A549 (cell line): ENCODE measurements at regions of chr20 and their contacts with region 1.

Region 1: DNA sequence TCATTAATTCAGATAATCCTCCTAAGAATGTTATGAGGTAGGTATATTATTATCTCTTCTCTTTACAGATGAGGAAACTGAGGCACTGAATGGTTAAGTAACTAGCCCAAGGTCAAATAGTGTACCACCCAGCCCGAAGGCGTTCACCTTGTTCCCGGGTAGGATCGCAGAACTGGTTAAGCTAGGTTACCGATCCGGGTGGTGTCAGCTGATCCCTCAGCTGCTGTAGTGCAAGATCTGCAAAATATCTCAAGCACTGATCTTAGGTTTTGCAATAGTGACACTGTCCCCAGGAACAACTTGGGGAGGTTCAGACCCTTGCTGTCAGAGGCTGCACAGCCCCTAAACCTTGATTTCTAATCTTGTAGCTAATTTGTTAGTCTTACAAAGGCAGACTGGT is 28.2 kb downstream of the SLC52A3 start:
- DNase-seq: no peak
- ATAC-seq: no peak
- H3K4me3 ChIP-seq: no peak overlapping the region
- H3K27ac ChIP-seq: no peak overlapping the region
- H3K4me1 ChIP-seq: no peaks in the 10 kb centered on the region
- CTCF ChIP-seq: no peak
- EP300 ChIP-seq: no peak
- POLR2A ChIP-seq: no peak
- RAD21 ChIP-seq: no peak

Region 2: GRCh38 chr20:431012-431904 is 308.9 kb before region 1 on chr20:
- CTCF ChIA-PET with region 1: interaction called, 20 read pairs
- POLR2A ChIA-PET with region 1: no interaction called
- DNase-seq: peak; percentile 94 to 95
- ATAC-seq: peak; percentile 70 to 93
- H3K4me3 ChIP-seq: no peak overlapping the region
- H3K27ac ChIP-seq: peak overlapping the region; percentile 27 to 73; a peak in 5 of 6 replicates
- H3K4me1 ChIP-seq: peaks cover 16% of the 10 kb centered on the region
- CTCF ChIP-seq: peak; percentile 99
- EP300 ChIP-seq: no peak
- POLR2A ChIP-seq: no peak
- RAD21 ChIP-seq: peak; percentile 95 to 98

Region 3: DNA sequence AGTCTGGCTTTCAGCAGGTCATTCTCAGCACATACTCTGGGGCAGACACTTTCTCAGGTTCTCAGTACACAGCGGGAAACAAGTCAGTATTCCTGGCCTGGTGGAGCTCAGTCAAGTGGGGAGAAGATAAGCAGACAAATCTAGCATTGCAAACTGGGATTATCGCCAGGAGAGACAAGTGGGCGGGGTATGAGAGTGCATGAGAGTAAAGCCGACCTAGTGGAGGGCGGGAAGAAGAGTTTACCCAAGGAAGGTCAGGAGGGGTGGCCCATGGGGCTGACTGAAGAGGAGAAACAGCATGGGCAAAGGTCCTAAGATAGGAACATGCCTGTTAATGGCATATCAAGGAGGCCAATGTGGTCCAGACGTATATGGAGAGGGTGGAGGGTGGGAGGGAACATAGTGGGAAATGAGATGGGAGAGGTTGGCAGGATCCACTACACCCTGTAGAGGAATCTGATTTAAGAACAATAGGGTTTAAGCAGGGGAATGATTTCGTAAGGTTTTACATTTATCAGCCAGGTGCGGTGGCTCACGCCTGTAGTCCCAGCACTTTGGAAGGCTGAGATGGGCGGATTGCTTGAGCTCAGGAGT is 184.1 kb before region 1 on chr20:
- CTCF ChIA-PET with region 1: interaction called, 432 read pairs
- POLR2A ChIA-PET with region 1: no interaction called
- DNase-seq: no peak
- ATAC-seq: no peak; a peak in 2 of 6 replicates
- H3K4me3 ChIP-seq: no peak overlapping the region
- H3K27ac ChIP-seq: no peak overlapping the region
- H3K4me1 ChIP-seq: peaks cover 16% of the 10 kb centered on the region; the same call in 2 of the 3 replicates
- CTCF ChIP-seq: no peak
- EP300 ChIP-seq: no peak
- POLR2A ChIP-seq: no peak
- RAD21 ChIP-seq: no peak

Region 4: GRCh38 chr20:653110-653589 is 87.0 kb before region 1 on chr20 and contains the start of gene SRXN1:
- CTCF ChIA-PET with region 1: interaction called, 25 read pairs
- POLR2A ChIA-PET with region 1: no interaction called
- DNase-seq: peak; percentile 93 to 98
- ATAC-seq: peak; percentile 83 to 86
- H3K4me3 ChIP-seq: peak within 1 kb of the TSS; percentile 87
- H3K27ac ChIP-seq: peak within 1 kb of the TSS; percentile 98
- H3K4me1 ChIP-seq: peaks cover 29% of the 10 kb centered on the region
- CTCF ChIP-seq: peak; percentile 93
- EP300 ChIP-seq: peak; percentile 52 to 81; a peak in 3 of 5 replicates
- POLR2A ChIP-seq: peak; percentile 93
- RAD21 ChIP-seq: peak; percentile 58 to 80
- polyA plus RNA-seq, gene SRXN1: 262 and 302 TPM in 2 replicates

Region 5: GRCh38 chr20:714453-714852 is 25.7 kb before region 1 on chr20:
- CTCF ChIA-PET with region 1: interaction called, 10 read pairs
- POLR2A ChIA-PET with region 1: no interaction called
- DNase-seq: no peak
- ATAC-seq: no peak
- H3K4me3 ChIP-seq: no peak overlapping the region
- H3K27ac ChIP-seq: no peak overlapping the region
- H3K4me1 ChIP-seq: no peaks in the 10 kb centered on the region
- CTCF ChIP-seq: no peak
- EP300 ChIP-seq: no peak
- POLR2A ChIP-seq: no peak
- RAD21 ChIP-seq: no peak

Region 6: DNA sequence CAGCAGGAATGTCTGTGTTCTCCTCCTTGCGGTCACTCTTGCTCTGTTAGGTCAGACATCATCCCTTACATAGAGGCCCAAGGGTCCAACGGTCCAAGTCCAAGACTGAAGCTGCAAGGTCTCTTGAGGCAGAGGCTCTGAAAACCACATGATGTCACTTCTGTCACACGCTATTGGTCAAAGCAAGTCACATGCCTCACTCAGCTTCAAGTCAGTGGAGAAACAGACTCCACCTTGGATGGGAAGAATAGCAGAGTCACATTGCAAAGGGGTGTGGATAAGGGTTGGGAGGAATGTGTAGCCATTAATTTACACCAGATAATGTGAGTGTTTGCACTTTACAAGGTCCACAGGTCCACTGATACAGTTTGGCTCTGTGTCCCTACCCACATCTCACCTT is 10.7 kb after region 1 on chr20:
- CTCF ChIA-PET with region 1: interaction called, 26 read pairs
- POLR2A ChIA-PET with region 1: no interaction called
- DNase-seq: peak in 1 of 2 experiments; percentile 49
- ATAC-seq: peak; percentile 42 to 50; a peak in 4 of 6 replicates
- H3K4me3 ChIP-seq: no peak overlapping the region
- H3K27ac ChIP-seq: no peak overlapping the region
- H3K4me1 ChIP-seq: no peaks in the 10 kb centered on the region
- CTCF ChIP-seq: no peak
- EP300 ChIP-seq: no peak
- POLR2A ChIP-seq: no peak
- RAD21 ChIP-seq: no peak

Region 7: GRCh38 chr20:768426-768978 is 28.4 kb after region 1 on chr20 and contains the start of gene SLC52A3:
- CTCF ChIA-PET with region 1: interaction called, 26 read pairs
- POLR2A ChIA-PET with region 1: no interaction called
- DNase-seq: peak; percentile 74 to 79
- ATAC-seq: peak; percentile 83 to 91
- H3K4me3 ChIP-seq: no peak within 1 kb of the TSS
- H3K27ac ChIP-seq: peak within 1 kb of the TSS; percentile 18 to 50; a peak in 1 of 6 replicates
- H3K4me1 ChIP-seq: peaks cover 11% of the 10 kb centered on the region; the same call in 2 of the 3 replicates
- CTCF ChIP-seq: peak; percentile 50
- EP300 ChIP-seq: no peak
- POLR2A ChIP-seq: no peak
- RAD21 ChIP-seq: peak; percentile 57 to 75
- polyA plus RNA-seq, gene SLC52A3: 0.63 and 0.95 TPM in 2 replicates

Region 8: GRCh38 chr20:910870-911770 is 171.0 kb after region 1 on chr20:
- CTCF ChIA-PET with region 1: no interaction called
- POLR2A ChIA-PET with region 1: no interaction called
- DNase-seq: no peak
- ATAC-seq: peak in 1 of 2 experiments; percentile 48; a peak in 3 of 6 replicates
- H3K4me3 ChIP-seq: no peak overlapping the region
- H3K27ac ChIP-seq: peak overlapping the region in 1 of 2 experiments; percentile 61; a peak in 3 of 6 replicates
- H3K4me1 ChIP-seq: peaks cover 15% of the 10 kb centered on the region
- CTCF ChIP-seq: no peak
- EP300 ChIP-seq: no peak
- POLR2A ChIP-seq: no peak
- RAD21 ChIP-seq: no peak